ENCODE measurements at regions of chr13 and their contacts with region 1.

Region 1: GRCh38 chr13:99436686-99437416 is 64.4 kb upstream of the TM9SF2 start:
- DNase-seq: peak; percentile 72
- H3K4me3 ChIP-seq: no peak overlapping the region
- H3K27ac ChIP-seq: no peak overlapping the region
- H3K27me3 ChIP-seq: peaks cover 18% of the 10 kb centered on the region
- CTCF ChIP-seq: peak; percentile 100

Region 2: GRCh38 chr13:99182439-99182838 is 254.4 kb before region 1 on chr13:
- CTCF ChIA-PET with region 1: interaction called, 123 read pairs
- POLR2A ChIA-PET with region 1: no interaction called
- DNase-seq: no peak
- H3K4me3 ChIP-seq: no peak overlapping the region
- H3K27ac ChIP-seq: no peak overlapping the region
- H3K27me3 ChIP-seq: peaks cover 13% of the 10 kb centered on the region
- CTCF ChIP-seq: no peak

Region 3: DNA sequence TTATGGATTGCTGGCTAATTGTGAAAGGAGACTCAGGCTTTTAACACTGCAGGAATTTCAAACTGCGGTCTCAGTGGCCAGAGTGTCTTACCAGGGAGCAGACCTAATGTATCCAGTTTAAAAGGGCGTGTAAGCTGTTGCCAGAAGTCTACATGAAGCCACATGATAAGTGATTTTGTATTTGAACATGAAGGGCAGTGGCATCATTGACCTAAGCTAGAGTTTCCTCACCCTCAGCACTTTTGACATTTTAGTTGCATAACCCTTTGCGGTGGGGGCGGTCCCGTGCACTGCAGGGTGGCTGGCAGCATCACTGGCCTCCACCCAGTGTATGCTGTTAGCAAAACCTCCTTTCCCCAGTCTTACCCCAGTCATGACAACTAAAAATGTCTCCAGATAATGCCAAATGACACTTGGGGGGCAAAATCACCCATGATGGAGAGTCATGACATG is 155.0 kb before region 1 on chr13:
- CTCF ChIA-PET with region 1: interaction called, 767 read pairs
- POLR2A ChIA-PET with region 1: no interaction called
- DNase-seq: no peak
- H3K4me3 ChIP-seq: no peak overlapping the region
- H3K27ac ChIP-seq: no peak overlapping the region
- H3K27me3 ChIP-seq: no peaks in the 10 kb centered on the region
- CTCF ChIP-seq: no peak

Region 4: GRCh38 chr13:99366075-99366987 is 70.5 kb before region 1 on chr13:
- CTCF ChIA-PET with region 1: interaction called, 10 read pairs
- POLR2A ChIA-PET with region 1: no interaction called
- DNase-seq: no peak
- H3K4me3 ChIP-seq: no peak overlapping the region
- H3K27ac ChIP-seq: no peak overlapping the region
- H3K27me3 ChIP-seq: no peaks in the 10 kb centered on the region
- CTCF ChIP-seq: no peak

Region 5: GRCh38 chr13:99425485-99426341 is 11.1 kb before region 1 on chr13:
- CTCF ChIA-PET with region 1: interaction called, 55 read pairs
- POLR2A ChIA-PET with region 1: no interaction called
- DNase-seq: no peak
- H3K4me3 ChIP-seq: no peak overlapping the region
- H3K27ac ChIP-seq: no peak overlapping the region
- H3K27me3 ChIP-seq: peaks cover 20% of the 10 kb centered on the region
- CTCF ChIP-seq: no peak

Region 6: GRCh38 chr13:99506634-99507033 is 69.8 kb after region 1 on chr13:
- CTCF ChIA-PET with region 1: interaction called, 77 read pairs
- POLR2A ChIA-PET with region 1: no interaction called
- DNase-seq: no peak
- H3K4me3 ChIP-seq: no peak overlapping the region
- H3K27ac ChIP-seq: no peak overlapping the region
- H3K27me3 ChIP-seq: no peaks in the 10 kb centered on the region
- CTCF ChIP-seq: no peak

Region 7: GRCh38 chr13:99916366-99917103 is 479.7 kb after region 1 on chr13:
- CTCF ChIA-PET with region 1: no interaction called
- POLR2A ChIA-PET with region 1: no interaction called
- DNase-seq: peak; percentile 33
- H3K4me3 ChIP-seq: no peak overlapping the region
- H3K27ac ChIP-seq: no peak overlapping the region
- H3K27me3 ChIP-seq: peaks cover 11% of the 10 kb centered on the region
- CTCF ChIP-seq: peak; percentile 98

Region 8: DNA sequence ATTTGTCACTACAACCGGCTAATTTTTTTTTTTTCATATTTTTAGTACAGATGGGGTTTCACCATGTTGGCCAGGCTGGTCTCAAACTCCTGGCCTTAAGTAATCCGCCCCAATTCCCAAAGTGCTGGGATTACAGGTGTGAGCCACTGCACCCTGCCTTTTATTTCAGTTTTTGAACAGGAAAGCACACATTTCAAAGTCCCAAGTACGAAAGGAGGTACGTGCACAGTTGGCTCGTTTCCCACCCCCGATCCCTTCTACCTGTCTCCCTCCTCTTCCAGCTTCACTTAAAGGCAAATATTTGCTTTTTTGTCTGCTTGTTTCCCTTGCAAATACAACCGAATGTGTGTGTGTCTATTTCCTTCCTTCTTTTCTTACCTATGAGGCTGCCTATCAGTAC is 504.2 kb after region 1 on chr13:
- CTCF ChIA-PET with region 1: no interaction called
- POLR2A ChIA-PET with region 1: no interaction called
- DNase-seq: no peak
- H3K4me3 ChIP-seq: no peak overlapping the region
- H3K27ac ChIP-seq: no peak overlapping the region
- H3K27me3 ChIP-seq: peaks cover 2% of the 10 kb centered on the region
- CTCF ChIP-seq: no peak

Measured in AG04450 (cell line).